ENCODE measurements at regions of chr14 and their contacts with region 1.

Region 1: DNA sequence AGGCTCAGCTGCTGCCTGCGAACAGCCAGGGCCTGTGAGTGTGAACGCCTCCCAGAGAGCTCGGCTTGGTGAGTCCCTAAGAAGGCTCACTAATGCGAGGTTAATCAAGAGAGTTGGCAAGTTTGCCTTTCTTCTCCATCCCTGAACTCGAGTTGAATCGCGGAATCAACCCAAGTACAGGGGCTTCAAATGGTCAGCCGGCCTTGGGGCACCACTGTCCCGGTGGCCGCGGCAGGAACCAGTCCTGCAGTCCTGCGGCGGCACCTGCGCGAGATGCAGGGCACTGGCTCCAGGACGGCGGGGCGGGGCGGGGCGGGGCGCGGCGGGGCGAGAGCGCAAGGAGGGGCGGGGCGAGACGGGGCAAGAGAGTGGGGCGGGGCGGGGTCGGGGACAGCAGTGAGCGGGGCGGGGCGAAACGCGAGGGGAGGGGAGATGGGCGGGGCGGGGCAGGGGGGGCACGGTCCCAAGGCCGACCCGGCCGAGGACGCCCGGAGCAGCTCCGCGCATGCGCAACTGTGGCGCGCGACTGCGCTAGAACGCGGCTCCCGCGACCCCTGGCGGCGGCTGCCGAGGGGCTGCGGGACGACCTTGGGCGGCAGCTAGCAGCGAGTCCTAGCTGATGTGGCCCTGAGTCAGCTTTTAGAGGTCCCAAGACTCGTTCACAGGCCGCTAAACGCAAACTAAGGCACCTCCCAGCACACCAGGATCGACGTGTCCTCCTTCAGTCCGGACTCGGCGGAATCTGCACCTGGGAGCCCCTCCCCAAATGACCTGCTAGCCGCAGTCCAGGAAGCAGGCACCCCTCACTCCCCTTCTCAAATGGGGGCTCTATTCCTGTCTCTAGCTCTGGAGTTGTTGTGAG is 58.0 kb downstream of the TTC7B start:
- DNase-seq: peak; percentile 83 to 98 (median 92)
- ATAC-seq: peak; percentile 94
- H3K4me3 ChIP-seq: peak overlapping the region; percentile 79
- H3K4me3 Mint-ChIP-seq: peak overlapping the region; percentile 75 to 92 (median 86)
- H3K27ac ChIP-seq: peak overlapping the region; percentile 75
- H3K27ac Mint-ChIP-seq: peak overlapping the region; percentile 80 to 95 (median 90)
- H3K4me1 ChIP-seq: peaks cover 7 to 21% of the 10 kb centered on the region in 2 donors
- H3K4me1 Mint-ChIP-seq: peaks cover 12 to 29% (median 23%) of the 10 kb centered on the region in 7 donors
- H3K27me3 ChIP-seq: no peaks in the 10 kb centered on the region
- H3K27me3 Mint-ChIP-seq: peaks cover 0 to 33% (median 6%) of the 10 kb centered on the region in 5 donors

Region 2: GRCh38 chr14:89589400-89590118 is 1168.7 kb before region 1 on chr14:
- CTCF ChIA-PET with region 1: no interaction called
- POLR2A ChIA-PET with region 1: no interaction called
- intact Hi-C with region 1: no loop called
- DNase-seq: no peak
- ATAC-seq: peak; percentile 76
- H3K4me3 ChIP-seq: no peak overlapping the region
- H3K4me3 Mint-ChIP-seq: peak overlapping the region in 6 of 10 donors; percentile 19 to 62 (median 44)
- H3K27ac ChIP-seq: no peak overlapping the region
- H3K27ac Mint-ChIP-seq: peak overlapping the region in 8 of 9 donors; percentile 11 to 82 (median 62)
- H3K4me1 ChIP-seq: peaks cover 9 to 29% of the 10 kb centered on the region in 2 donors
- H3K4me1 Mint-ChIP-seq: peaks cover 57 to 87% (median 79%) of the 10 kb centered on the region in 7 donors
- H3K27me3 ChIP-seq: no peaks in the 10 kb centered on the region
- H3K27me3 Mint-ChIP-seq: no peaks in the 10 kb centered on the region

Region 3: GRCh38 chr14:90256354-90257131 is 501.7 kb before region 1 on chr14 and contains the start of gene PSMC1:
- CTCF ChIA-PET with region 1: no interaction called
- POLR2A ChIA-PET with region 1: interaction called, 6 read pairs
- intact Hi-C with region 1: loop called (anchors 1 to 5 kb)
- DNase-seq: peak; percentile 51 to 89 (median 85)
- ATAC-seq: peak; percentile 97
- H3K4me3 ChIP-seq: peak within 1 kb of the TSS; percentile 87
- H3K4me3 Mint-ChIP-seq: peak within 1 kb of the TSS; percentile 86 to 99 (median 96)
- H3K27ac ChIP-seq: peak within 1 kb of the TSS; percentile 86
- H3K27ac Mint-ChIP-seq: peak within 1 kb of the TSS; percentile 90 to 98 (median 96)
- H3K4me1 ChIP-seq: peaks cover 13 to 17% of the 10 kb centered on the region in 2 donors
- H3K4me1 Mint-ChIP-seq: peaks cover 12 to 39% (median 34%) of the 10 kb centered on the region in 7 donors
- H3K27me3 ChIP-seq: no peaks in the 10 kb centered on the region
- H3K27me3 Mint-ChIP-seq: peaks cover 0 to 10% (median 7%) of the 10 kb centered on the region in 5 donors
- total RNA-seq, gene PSMC1: 47.9 to 101 (median 58.2) TPM

Region 4: DNA sequence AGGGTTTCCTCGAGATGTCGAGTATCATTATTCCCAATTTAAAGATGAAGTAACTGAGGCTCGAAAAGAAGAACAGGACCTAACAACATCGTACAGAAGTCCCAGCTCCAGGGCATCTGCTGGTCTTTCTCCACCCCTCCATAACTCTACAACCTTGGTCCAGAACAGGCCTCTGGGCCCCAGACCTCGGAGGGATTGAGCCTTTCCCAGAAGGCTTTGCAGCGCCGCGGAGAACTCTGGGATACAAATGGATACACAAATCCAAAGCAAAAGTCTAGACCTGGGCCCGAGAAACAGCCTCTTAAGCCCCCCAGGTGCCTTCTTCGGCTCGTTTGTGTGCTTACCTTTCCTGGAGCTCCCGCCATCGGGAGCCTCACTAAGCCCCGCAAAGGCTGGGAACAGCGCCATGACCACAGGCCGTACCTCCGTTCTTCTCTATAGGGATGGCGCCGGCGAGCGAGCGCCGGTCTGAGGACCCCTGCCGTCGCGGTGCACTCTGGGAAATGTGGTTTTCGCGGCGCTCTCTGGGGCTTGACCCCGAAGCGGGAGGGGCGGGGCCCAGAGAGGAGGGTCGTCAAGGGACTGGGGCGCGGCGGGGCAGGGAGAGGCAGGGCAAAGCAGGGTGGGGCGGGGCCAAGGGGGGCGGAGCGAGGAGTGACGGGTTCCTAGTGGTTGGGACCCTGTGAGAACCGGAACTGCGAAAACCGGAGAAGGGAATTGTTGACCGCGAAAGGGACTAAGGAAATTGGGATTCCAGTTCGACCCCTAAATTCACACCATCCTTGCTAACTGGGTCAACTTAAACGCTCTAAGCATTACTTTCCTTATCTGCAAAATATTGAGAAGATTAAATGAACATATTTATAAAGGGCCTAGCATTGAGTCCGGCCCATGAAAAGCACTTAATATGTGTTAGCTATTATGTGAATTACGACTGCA is 426.5 kb before region 1 on chr14 and contains the start of gene NRDE2:
- CTCF ChIA-PET with region 1: no interaction called
- POLR2A ChIA-PET with region 1: no interaction called
- intact Hi-C with region 1: loop called (anchors 1 kb)
- DNase-seq: peak; percentile 74 to 95 (median 85)
- ATAC-seq: peak; percentile 99
- H3K4me3 ChIP-seq: peak within 1 kb of the TSS; percentile 91
- H3K4me3 Mint-ChIP-seq: peak within 1 kb of the TSS; percentile 90 to 95 (median 93)
- H3K27ac ChIP-seq: peak within 1 kb of the TSS; percentile 72
- H3K27ac Mint-ChIP-seq: peak within 1 kb of the TSS; percentile 86 to 97 (median 92)
- H3K4me1 ChIP-seq: peaks cover 0 to 9% of the 10 kb centered on the region in 2 donors
- H3K4me1 Mint-ChIP-seq: peaks cover 14 to 44% (median 38%) of the 10 kb centered on the region in 7 donors
- H3K27me3 ChIP-seq: no peaks in the 10 kb centered on the region
- H3K27me3 Mint-ChIP-seq: peaks cover 7 to 25% (median 9%) of the 10 kb centered on the region in 5 donors
- total RNA-seq, gene NRDE2: 23.6 to 30.2 (median 28.7) TPM

Region 5: GRCh38 chr14:90697577-90698206 is 60.6 kb before region 1 on chr14:
- CTCF ChIA-PET with region 1: interaction called, 4 read pairs
- POLR2A ChIA-PET with region 1: interaction called, 3 read pairs
- intact Hi-C with region 1: loop called in 1 of 2 experiments (anchors 1 kb)
- DNase-seq: peak; percentile 48 to 75 (median 70)
- ATAC-seq: peak; percentile 91
- H3K4me3 ChIP-seq: no peak overlapping the region
- H3K4me3 Mint-ChIP-seq: no peak overlapping the region
- H3K27ac ChIP-seq: no peak overlapping the region
- H3K27ac Mint-ChIP-seq: no peak overlapping the region
- H3K4me1 ChIP-seq: no peaks in the 10 kb centered on the region
- H3K4me1 Mint-ChIP-seq: peaks cover 0 to 5% (median 0%) of the 10 kb centered on the region in 7 donors
- H3K27me3 ChIP-seq: no peaks in the 10 kb centered on the region
- H3K27me3 Mint-ChIP-seq: no peaks in the 10 kb centered on the region

Region 6: DNA sequence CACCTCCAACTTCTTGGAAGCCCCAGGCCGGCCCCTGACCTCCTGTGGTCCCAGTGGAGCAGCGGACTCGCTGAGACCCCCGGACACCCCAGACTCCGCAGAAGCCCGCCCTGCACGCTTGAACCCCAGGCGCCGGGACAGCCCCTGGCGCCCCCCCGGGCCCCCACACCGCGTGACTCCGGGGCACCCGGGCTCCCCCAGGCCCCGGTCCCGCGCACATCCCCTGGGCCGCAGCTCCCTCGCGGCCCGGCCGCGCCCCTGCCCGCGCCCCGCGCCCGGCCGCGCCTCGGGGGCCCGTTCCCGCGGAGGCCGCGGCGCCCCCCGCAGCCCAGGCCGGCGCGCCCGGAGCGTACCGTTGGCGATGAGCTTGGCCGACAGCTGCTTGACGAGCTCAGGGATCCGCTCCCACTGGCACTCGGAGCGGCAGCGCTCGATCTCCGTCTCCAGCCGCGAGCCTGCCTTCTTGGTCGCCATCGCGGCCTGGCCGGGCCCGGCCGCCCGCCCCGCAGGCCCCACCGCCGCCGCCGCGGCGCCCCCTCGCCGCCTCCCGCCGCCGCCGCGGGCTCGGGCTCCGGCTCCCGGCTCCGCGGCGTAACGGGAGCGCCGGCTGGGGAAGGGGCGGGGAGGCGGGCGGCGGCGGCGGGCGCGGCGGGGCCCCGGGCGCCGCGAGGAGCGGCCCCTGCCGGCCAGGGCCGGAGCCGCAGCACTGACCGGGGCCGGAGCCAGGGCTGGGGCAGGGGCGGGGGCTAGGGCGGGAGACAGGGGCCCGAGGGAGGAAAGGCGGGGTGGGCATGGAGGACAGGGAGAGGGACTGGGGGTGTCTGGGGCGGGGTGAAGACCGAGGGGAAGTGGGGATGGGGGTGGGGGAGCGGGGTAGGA is 57.8 kb after region 1 on chr14 and contains the start of gene TTC7B:
- CTCF ChIA-PET with region 1: interaction called, 3 read pairs
- POLR2A ChIA-PET with region 1: no interaction called
- intact Hi-C with region 1: loop called in 1 of 2 experiments (anchors 2 kb)
- DNase-seq: peak in 3 of 9 donors; percentile 25 to 59 (median 34)
- ATAC-seq: peak; percentile 80
- H3K4me3 ChIP-seq: no peak within 1 kb of the TSS
- H3K4me3 Mint-ChIP-seq: peak within 1 kb of the TSS; percentile 67 to 88 (median 75)
- H3K27ac ChIP-seq: no peak within 1 kb of the TSS
- H3K27ac Mint-ChIP-seq: peak within 1 kb of the TSS in 4 of 9 donors; percentile 2 to 33 (median 18)
- H3K4me1 ChIP-seq: peaks cover 4 to 5% of the 10 kb centered on the region in 2 donors
- H3K4me1 Mint-ChIP-seq: peaks cover 4 to 13% (median 10%) of the 10 kb centered on the region in 7 donors
- H3K27me3 ChIP-seq: peaks cover 0 to 4% of the 10 kb centered on the region in 2 donors
- H3K27me3 Mint-ChIP-seq: peaks cover 5 to 43% (median 6%) of the 10 kb centered on the region in 5 donors
- total RNA-seq, gene TTC7B: 0.65 to 9.5 (median 5.0) TPM in 4 of 5 experiments, not detected in the other

Region 7: DNA sequence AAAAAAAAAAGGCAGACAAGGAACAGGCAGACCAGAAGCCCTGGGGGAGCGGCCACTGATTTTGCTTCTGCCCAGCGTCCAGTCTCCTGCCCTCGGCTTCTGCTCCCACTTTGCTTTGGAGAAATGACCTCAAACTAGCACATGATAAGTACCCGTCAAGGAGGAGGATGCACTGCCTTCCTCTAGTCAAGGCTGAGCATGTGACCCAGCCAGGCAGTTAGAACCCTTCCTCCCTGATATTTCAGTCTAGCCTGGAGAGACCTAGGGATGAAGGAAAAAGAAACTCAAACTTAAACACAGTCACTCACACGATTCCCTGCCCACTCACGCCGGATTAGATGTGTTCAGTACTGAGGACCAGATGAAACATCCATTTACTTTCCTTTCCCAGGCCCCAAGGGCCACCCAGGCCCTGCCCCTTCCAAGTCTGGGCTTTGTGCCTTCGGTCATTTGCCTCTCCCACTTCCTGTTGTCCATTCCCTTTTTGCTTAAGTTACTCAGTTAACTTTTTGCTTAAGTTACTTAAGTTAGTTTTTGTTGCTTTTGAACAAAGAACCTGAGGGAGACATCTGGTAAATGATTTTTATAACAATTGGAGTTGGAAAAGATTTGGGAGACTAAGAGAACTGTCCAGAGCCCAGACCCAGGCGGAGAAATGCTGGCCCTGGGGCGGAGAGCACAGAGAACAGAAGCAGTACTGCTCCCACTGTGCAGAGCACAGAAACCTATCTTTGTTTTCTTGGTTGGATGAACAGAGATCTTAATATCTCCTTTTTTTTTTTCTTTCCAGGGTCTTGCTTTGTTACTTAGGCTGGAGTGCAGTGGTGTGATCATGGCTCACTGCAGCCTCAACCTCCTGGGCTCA is 81.0 kb after region 1 on chr14:
- CTCF ChIA-PET with region 1: no interaction called
- POLR2A ChIA-PET with region 1: no interaction called
- intact Hi-C with region 1: no loop called
- DNase-seq: no peak
- ATAC-seq: no peak
- H3K4me3 ChIP-seq: no peak overlapping the region
- H3K4me3 Mint-ChIP-seq: no peak overlapping the region
- H3K27ac ChIP-seq: no peak overlapping the region
- H3K27ac Mint-ChIP-seq: peak overlapping the region in 1 of 9 donors; percentile 6
- H3K4me1 ChIP-seq: peaks cover 4 to 9% of the 10 kb centered on the region in 2 donors
- H3K4me1 Mint-ChIP-seq: peaks cover 8 to 34% (median 16%) of the 10 kb centered on the region in 7 donors
- H3K27me3 ChIP-seq: no peaks in the 10 kb centered on the region
- H3K27me3 Mint-ChIP-seq: peaks cover 0 to 22% (median 0%) of the 10 kb centered on the region in 5 donors

Region 8: DNA sequence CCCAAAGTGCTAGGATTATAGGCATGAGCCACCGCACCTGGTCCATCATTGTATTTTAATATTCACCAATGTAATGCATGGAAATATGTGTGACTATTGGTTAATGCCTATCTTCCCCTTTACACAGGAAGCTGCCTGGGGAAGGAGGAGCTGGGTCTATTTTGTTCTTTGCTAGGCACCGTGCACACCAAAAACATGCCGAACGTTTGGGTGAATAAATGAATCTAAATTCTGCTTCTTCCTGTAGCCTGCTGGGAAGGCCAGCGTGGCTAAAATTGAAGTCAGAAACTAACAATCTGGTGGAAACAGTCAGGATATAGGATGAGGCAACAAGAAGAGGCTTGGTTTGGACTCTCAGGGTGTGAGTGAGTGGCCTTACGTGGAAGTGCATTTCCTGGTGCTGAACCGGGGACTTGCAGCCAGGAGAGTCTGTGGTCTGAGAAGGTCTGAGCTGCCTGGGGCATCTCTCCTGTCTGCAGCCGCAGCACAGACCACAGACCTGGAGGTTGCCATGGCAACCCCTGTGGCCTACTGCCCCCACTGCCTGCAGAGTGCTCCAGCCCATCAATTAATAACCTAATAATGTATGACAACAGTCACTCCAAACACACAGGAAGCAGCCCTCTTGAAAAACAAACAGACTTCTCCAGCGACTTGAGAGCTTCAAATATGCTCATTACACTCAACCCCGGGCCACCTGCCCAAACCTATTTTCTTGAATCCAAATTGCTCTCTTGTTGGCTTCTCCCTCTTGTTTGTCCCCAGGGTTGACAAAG is 491.8 kb after region 1 on chr14:
- CTCF ChIA-PET with region 1: no interaction called
- POLR2A ChIA-PET with region 1: no interaction called
- intact Hi-C with region 1: loop called in 1 of 2 experiments (anchors 5 kb)
- DNase-seq: peak in 4 of 9 donors; percentile 20 to 52 (median 40)
- ATAC-seq: peak; percentile 8
- H3K4me3 ChIP-seq: peak overlapping the region; percentile 36
- H3K4me3 Mint-ChIP-seq: peak overlapping the region; percentile 27 to 84 (median 57)
- H3K27ac ChIP-seq: peak overlapping the region; percentile 55
- H3K27ac Mint-ChIP-seq: peak overlapping the region; percentile 53 to 98 (median 91)
- H3K4me1 ChIP-seq: peaks cover 63 to 81% of the 10 kb centered on the region in 2 donors
- H3K4me1 Mint-ChIP-seq: peaks cover 54 to 87% (median 80%) of the 10 kb centered on the region in 7 donors
- H3K27me3 ChIP-seq: no peaks in the 10 kb centered on the region
- H3K27me3 Mint-ChIP-seq: no peaks in the 10 kb centered on the region